ENCODE measurements at regions of chr11 and their contacts with region 1.

Region 1: GRCh38 chr11:17730608-17731462 is 3.7 kb upstream of the KCNC1 start:
- DNase-seq: peak; percentile 33
- H3K4me3 ChIP-seq: no peak overlapping the region
- H3K27ac ChIP-seq: no peak overlapping the region
- H3K27me3 ChIP-seq: peaks cover 35% of the 10 kb centered on the region
- CTCF ChIP-seq: peak; percentile 97

Region 2: GRCh38 chr11:17743808-17744119 is 12.9 kb after region 1 on chr11:
- CTCF ChIA-PET with region 1: interaction called, 21 read pairs
- POLR2A ChIA-PET with region 1: no interaction called
- DNase-seq: peak; percentile 23
- H3K4me3 ChIP-seq: no peak overlapping the region
- H3K27ac ChIP-seq: no peak overlapping the region
- H3K27me3 ChIP-seq: peaks cover 10% of the 10 kb centered on the region
- CTCF ChIP-seq: no peak

Region 3: DNA sequence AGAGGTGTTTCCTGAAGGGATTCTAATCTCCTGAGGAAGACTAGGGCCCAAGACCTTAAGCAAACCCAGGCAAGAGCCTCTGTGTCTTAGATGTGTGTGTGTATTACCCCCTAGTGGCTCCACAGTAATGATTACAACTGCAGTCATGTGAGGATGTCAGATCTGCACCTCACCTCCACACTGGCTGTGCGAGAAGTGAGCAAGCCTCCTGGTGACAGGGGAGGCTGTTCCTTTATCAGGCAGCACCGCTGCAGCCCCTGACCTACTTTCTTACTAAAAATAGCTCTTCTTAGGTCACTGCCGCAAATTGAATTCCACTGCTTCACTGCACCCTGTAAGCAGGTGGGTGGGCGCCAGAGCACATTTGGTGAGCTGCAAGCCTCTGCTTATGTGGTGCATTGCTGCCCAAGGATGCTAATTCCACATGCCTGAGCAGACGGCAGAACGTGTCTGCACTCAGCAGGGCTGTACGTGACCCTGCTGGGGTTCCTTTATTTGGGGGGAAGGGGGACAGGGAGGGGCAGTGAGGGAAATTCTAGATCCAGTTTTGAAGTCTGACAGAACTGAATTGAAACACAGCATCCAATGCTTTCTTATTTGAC is 116.1 kb after region 1 on chr11:
- CTCF ChIA-PET with region 1: interaction called, 59 read pairs
- POLR2A ChIA-PET with region 1: no interaction called
- DNase-seq: no peak
- H3K4me3 ChIP-seq: no peak overlapping the region
- H3K27ac ChIP-seq: no peak overlapping the region
- H3K27me3 ChIP-seq: no peaks in the 10 kb centered on the region
- CTCF ChIP-seq: peak; percentile 62

Region 4: DNA sequence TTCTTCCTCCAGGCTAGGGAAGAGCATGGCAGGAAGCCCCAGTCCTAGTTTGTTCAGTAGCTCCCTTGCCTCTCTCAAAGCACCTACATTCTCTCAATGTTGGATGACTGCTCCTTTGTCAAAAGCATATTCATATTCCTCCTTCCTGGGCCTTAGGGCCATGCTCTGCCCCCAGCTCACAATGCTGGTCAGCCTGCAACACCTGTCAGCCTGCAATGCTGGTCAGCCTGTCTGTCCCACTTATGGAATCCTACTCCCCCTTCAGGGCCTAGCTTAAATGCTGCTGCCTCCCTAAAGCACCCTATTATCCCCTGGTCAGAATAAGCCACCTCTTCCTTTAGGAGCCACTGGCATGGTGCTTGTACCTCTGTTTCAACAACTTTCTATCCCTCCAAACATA is 236.8 kb after region 1 on chr11:
- CTCF ChIA-PET with region 1: interaction called, 678 read pairs
- POLR2A ChIA-PET with region 1: interaction called, 4 read pairs
- DNase-seq: no peak
- H3K4me3 ChIP-seq: no peak overlapping the region
- H3K27ac ChIP-seq: no peak overlapping the region
- H3K27me3 ChIP-seq: no peaks in the 10 kb centered on the region
- CTCF ChIP-seq: no peak

Region 5: DNA sequence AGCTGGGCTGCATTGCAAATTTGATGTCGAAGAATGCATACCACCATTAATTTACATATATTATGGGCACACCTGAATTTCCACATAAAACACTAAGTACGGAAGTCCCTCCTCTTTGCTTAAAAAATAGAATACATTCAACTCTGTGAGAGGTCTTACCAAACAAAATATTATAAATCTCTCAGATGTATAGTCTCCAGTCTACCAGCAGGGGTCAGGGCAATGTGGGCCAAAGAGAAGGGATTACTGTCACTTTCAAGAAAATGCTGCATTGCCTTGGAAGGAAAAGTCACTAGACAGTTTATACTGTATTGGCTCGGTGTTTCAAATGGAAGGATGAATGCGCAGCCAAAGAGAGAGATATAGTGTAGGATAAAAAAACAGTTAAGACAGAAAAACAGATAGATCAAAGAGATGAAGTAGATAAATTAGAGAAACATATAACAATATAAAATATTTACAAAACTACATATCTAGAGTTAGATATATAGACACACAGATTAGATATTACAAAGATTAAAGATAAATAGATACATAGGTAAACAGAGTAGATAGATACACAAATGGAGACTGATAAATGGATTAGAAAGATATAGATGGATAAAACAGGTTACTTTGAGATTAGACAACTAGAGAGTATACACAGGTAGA is 261.1 kb after region 1 on chr11:
- CTCF ChIA-PET with region 1: interaction called, 93 read pairs
- POLR2A ChIA-PET with region 1: no interaction called
- DNase-seq: peak; percentile 36
- H3K4me3 ChIP-seq: no peak overlapping the region
- H3K27ac ChIP-seq: no peak overlapping the region
- H3K27me3 ChIP-seq: no peaks in the 10 kb centered on the region
- CTCF ChIP-seq: peak; percentile 92